ENCODE measurements at regions of chr1 and their contacts with region 1.

Region 1: GRCh38 chr1:196372896-196373536 is 235.2 kb downstream of the KCNT2 start:
- DNase-seq: no peak
- H3K4me3 ChIP-seq: no peak overlapping the region
- H3K4me3 Mint-ChIP-seq: no peak overlapping the region
- H3K27ac Mint-ChIP-seq: no peak overlapping the region
- H3K4me1 ChIP-seq: no peaks in the 10 kb centered on the region
- H3K4me1 Mint-ChIP-seq: peaks cover 4% of the 10 kb centered on the region
- H3K27me3 ChIP-seq: no peaks in the 10 kb centered on the region
- H3K27me3 Mint-ChIP-seq: peaks cover 2% of the 10 kb centered on the region
- CTCF ChIP-seq: peak; percentile 33 to 47

Region 2: DNA sequence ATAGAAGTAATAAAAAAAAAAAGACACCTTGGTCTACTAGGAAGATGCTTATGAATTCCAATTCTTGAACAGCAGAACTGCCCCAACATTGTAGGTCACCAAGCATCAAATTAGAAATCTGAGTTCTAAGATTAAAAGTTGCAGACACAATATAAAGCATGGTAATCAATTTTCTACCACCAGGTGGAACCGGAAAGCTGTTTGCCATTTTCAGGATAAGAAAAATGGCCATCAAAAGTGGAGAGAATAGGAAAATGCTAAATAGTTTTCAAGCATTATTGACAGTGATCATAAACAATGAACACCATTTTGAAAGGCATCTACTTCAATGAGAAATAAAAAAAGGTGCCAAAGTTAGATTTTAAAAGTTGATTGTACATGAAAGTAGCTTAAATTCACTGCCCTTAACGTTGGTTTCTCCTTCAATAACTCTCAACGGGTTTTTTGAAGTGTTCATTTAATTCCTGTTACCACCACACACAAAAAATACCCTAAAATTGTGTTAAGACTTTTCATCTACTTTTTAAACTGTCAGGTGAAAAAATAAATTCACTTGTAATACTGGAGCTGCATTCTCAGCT is 17.7 kb before region 1 on chr1:
- CTCF ChIA-PET with region 1: no interaction called
- POLR2A ChIA-PET with region 1: no interaction called
- intact Hi-C with region 1: loop called (anchors 2 kb)
- DNase-seq: peak in 1 of 2 experiments; percentile 9
- H3K4me3 ChIP-seq: no peak overlapping the region
- H3K4me3 Mint-ChIP-seq: no peak overlapping the region
- H3K27ac Mint-ChIP-seq: no peak overlapping the region
- H3K4me1 ChIP-seq: no peaks in the 10 kb centered on the region
- H3K4me1 Mint-ChIP-seq: no peaks in the 10 kb centered on the region
- H3K27me3 ChIP-seq: no peaks in the 10 kb centered on the region
- H3K27me3 Mint-ChIP-seq: no peaks in the 10 kb centered on the region
- CTCF ChIP-seq: peak; percentile 21 to 25

Region 3: DNA sequence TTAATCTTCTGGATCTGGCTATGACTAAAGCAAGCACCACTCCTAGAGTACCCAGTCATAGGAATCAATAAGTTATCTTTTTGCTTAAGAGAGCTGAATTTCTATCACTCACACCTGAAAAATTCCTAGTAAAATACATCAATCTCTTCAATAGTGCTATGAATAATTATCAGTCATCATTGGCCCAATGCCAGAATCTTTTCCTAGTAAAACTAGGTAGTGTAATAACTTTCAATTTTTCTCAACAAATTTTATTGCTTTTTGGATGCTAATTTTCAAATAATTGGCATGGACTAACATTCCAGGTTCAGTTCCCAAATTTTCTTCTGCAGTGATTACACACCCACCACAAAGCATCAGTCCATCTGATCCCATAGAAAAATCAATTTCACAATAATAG is 248.9 kb after region 1 on chr1:
- CTCF ChIA-PET with region 1: no interaction called
- POLR2A ChIA-PET with region 1: no interaction called
- intact Hi-C with region 1: no loop called
- DNase-seq: no peak
- H3K4me3 ChIP-seq: no peak overlapping the region
- H3K4me3 Mint-ChIP-seq: no peak overlapping the region
- H3K27ac Mint-ChIP-seq: no peak overlapping the region
- H3K4me1 ChIP-seq: no peaks in the 10 kb centered on the region
- H3K4me1 Mint-ChIP-seq: no peaks in the 10 kb centered on the region
- H3K27me3 ChIP-seq: no peaks in the 10 kb centered on the region
- H3K27me3 Mint-ChIP-seq: no peaks in the 10 kb centered on the region
- CTCF ChIP-seq: no peak

Measured in Caco-2 (cell line).